ENCODE measurements at regions of chr3 and their contacts with region 1.

Region 1: GRCh38 chr3:159260049-159260662 is 458.3 kb downstream of the MFSD1 start:
- DNase-seq: peak in 1 of 2 donors; percentile 21
- H3K4me3 ChIP-seq: no peak overlapping the region
- H3K27ac ChIP-seq: no peak overlapping the region
- H3K4me1 ChIP-seq: no peaks in the 10 kb centered on the region
- H3K27me3 ChIP-seq: no peaks in the 10 kb centered on the region
- CTCF ChIP-seq: peak; percentile 34 to 81 (median 78)
- POLR2A ChIP-seq: no peak

Region 2: GRCh38 chr3:159804726-159805410 is 544.7 kb after region 1 on chr3:
- intact Hi-C with region 1: loop called (anchors 10 kb)
- DNase-seq: peak in 1 of 2 donors; percentile 60
- H3K4me3 ChIP-seq: peak overlapping the region in 1 of 3 donors; percentile 16
- H3K27ac ChIP-seq: peak overlapping the region in 1 of 2 donors; percentile 59
- H3K4me1 ChIP-seq: no peaks in the 10 kb centered on the region
- H3K27me3 ChIP-seq: no peaks in the 10 kb centered on the region
- CTCF ChIP-seq: peak; percentile 51 to 83 (median 80)
- POLR2A ChIP-seq: no peak